Calu3 (cell line): ENCODE measurements at regions of chr1 and their contacts with region 1.

Region 1: DNA sequence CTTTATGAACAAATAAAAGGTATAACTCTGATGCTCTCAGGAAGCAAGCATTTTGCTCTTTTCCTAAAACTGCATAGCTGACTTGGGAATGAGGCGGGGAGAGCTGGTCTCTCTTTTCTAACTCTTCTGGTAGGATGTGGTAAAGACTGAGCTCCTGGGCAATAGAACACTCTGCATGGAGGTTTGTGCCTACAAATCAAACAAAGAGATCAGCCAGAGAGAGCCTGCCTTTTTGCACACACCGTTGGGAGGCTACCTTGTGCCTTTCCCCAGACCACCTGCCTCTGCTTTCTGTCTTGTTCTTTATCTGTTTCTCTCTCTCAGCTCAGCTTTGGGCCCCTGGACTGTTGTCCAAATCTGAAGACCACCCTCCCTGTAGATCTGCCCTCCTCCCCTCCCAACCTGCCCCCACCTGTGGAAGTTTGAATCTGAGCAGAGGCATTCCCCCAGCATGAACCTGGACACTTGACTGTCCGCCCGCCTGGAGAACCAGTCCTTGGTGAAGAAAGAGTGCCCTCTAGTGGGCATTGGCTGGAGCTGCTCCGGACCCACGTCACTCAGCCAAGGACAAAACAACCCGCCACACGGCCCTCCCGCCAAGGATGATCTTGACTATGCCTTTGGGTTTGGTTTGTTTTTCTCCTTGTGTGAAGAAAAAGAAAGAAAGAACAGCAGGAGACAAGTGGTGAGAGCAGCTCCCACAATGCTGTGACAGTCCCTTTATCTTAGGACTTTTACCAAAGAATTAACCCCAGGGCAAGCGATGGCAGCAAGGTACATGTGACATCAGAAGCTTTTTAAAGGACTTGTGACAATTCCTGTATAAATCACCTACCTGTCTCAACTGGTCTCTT is 228.2 kb downstream of the PBX1 start:
- DNase-seq: peak; percentile 81
- H3K4me3 Mint-ChIP-seq: no peak overlapping the region
- H3K27ac Mint-ChIP-seq: no peak overlapping the region
- H3K4me1 Mint-ChIP-seq: peaks cover 17% of the 10 kb centered on the region
- H3K27me3 Mint-ChIP-seq: no peaks in the 10 kb centered on the region
- CTCF ChIP-seq: peak; percentile 92

Region 2: DNA sequence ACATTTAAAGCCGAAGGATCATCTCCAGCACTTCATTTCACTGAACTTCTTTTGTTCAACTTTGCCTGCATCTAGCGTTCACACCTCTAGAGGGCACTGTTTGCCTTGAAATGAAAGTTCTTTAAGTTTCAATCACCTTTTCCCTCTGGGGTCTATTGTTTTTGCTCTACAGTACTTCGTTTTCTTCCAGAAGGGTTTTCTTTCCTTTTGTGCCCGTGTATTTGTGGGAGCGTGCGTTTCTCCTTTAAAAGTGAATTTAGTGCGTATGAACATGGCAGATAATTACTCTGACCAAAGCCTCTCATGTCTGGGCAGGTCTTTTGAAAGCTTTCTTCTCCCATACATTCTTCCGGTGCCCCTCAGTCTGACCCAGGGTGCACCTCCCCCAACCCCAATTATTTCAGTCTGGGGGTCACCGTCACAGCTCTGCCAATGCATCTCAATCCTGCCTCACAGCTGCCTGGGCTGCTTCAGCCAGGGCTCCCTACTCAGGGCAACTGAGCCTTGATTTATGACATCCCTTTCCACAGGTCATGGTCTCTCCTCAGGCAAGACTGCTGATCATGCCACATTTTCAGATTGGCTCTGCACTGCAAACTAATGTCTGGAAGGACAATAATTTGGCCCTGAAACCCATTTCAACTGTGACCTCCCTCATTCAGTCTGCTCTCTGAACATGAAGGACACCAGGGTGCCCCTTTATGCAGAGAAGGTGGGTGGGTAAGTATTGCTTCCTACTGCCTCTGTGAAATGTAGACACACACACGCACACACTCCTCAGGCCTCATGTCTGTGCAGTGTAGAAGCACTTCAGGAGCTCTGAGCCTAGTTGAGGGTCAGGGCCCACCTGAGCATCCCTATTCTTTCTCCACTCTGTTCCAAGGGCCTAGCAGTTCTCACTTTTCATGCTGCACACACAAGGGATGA is 1376.9 kb before region 1 on chr1:
- CTCF ChIA-PET with region 1: no interaction called
- intact Hi-C with region 1: loop called (anchors 10 kb)
- DNase-seq: peak; percentile 65
- H3K4me3 Mint-ChIP-seq: no peak overlapping the region
- H3K27ac Mint-ChIP-seq: no peak overlapping the region
- H3K4me1 Mint-ChIP-seq: peaks cover 8% of the 10 kb centered on the region
- H3K27me3 Mint-ChIP-seq: peaks cover 38% of the 10 kb centered on the region
- CTCF ChIP-seq: peak; percentile 80

Region 3: GRCh38 chr1:163820766-163821165 is 966.4 kb before region 1 on chr1:
- CTCF ChIA-PET with region 1: no interaction called
- intact Hi-C with region 1: loop called (anchors 10 kb)
- DNase-seq: no peak
- H3K4me3 Mint-ChIP-seq: no peak overlapping the region
- H3K27ac Mint-ChIP-seq: no peak overlapping the region
- H3K4me1 Mint-ChIP-seq: no peaks in the 10 kb centered on the region
- H3K27me3 Mint-ChIP-seq: no peaks in the 10 kb centered on the region
- CTCF ChIP-seq: no peak

Region 4: GRCh38 chr1:164510435-164510834 is 276.8 kb before region 1 on chr1:
- CTCF ChIA-PET with region 1: interaction called, 9 read pairs
- intact Hi-C with region 1: loop called (anchors 5 kb)
- DNase-seq: no peak
- H3K4me3 Mint-ChIP-seq: no peak overlapping the region
- H3K27ac Mint-ChIP-seq: no peak overlapping the region
- H3K4me1 Mint-ChIP-seq: no peaks in the 10 kb centered on the region
- H3K27me3 Mint-ChIP-seq: peaks cover 6% of the 10 kb centered on the region
- CTCF ChIP-seq: no peak

Region 5: DNA sequence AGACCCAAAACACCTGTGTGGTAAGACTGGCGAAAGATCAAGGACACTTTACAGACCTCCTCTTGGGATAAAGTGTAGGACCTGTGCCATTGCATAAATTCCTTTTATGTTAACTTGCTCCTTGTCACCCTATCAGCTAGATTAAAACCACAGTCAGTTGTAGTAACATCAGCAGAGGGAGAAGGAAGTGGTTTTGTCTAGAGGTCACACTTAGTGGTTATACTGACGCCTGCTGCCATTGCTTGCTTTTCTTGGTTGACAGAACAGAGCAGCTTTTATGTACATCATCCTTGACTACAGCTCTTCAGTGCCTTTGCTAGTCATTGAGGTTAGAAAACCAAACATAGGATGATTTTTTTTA is 126.8 kb before region 1 on chr1:
- CTCF ChIA-PET with region 1: interaction called, 4 read pairs
- intact Hi-C with region 1: loop called (anchors 5 kb)
- DNase-seq: peak; percentile 49
- H3K4me3 Mint-ChIP-seq: peak overlapping the region; percentile 50
- H3K27ac Mint-ChIP-seq: peak overlapping the region; percentile 88
- H3K4me1 Mint-ChIP-seq: peaks cover 64% of the 10 kb centered on the region
- H3K27me3 Mint-ChIP-seq: no peaks in the 10 kb centered on the region
- CTCF ChIP-seq: no peak

Region 6: DNA sequence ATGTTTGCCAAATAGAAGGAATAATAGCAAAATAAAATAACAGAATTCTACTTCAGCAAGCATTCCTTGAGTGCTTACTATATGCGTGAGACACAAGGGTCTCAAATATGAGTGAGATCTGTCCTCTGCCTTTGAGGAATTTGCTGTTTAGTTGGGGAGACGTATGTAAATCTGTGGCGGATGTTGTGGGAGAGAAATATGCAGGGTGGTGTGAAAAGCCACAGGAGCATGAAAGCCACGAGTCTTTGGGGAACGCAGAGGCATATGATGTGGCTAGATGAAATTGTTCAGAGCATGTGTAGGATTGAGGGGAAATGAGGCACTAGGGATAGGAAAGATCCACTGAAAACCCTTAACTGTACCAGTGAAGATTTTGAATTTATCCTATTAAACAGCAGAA is 16.2 kb after region 1 on chr1:
- CTCF ChIA-PET with region 1: no interaction called
- intact Hi-C with region 1: no loop called
- DNase-seq: no peak
- H3K4me3 Mint-ChIP-seq: no peak overlapping the region
- H3K27ac Mint-ChIP-seq: no peak overlapping the region
- H3K4me1 Mint-ChIP-seq: peaks cover 17% of the 10 kb centered on the region
- H3K27me3 Mint-ChIP-seq: no peaks in the 10 kb centered on the region
- CTCF ChIP-seq: no peak